ENCODE measurements at regions of chr4 and their contacts with region 1.

Region 1: DNA sequence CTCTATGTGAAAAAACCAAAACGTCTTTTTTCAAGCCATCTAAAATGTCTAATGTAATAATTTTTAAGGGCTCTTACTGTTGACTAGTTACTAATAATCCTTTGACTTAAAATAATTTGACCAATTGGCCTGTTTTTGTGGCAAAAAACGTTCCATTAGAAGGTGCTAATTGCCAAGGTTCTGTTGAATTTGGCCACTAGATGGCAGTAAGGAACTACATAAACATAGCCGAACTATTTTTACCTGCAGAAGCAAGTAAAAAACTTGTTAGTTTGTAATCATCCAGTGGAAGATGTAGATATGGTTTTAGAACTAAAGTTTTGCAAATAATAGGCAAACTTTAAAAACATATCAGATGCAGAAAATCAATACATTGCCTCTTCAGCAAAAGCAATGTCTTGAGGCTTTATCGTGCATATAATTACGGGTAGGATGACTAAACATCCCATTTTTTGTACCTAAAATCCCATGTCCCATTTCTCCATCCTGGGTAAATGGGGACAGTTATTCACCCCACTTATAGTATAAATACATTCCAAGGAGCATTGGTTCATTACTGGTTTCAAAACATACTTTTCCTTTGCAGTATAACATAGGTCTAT is 57.6 kb downstream of the PROM1 start:
- DNase-seq: no peak
- ATAC-seq: peak; percentile 35 to 49

Region 2: GRCh38 chr4:15809058-15809457 is 217.2 kb before region 1 on chr4:
- intact Hi-C with region 1: no loop called
- DNase-seq: no peak
- ATAC-seq: peak in 1 of 2 donors; percentile 53

Region 3: DNA sequence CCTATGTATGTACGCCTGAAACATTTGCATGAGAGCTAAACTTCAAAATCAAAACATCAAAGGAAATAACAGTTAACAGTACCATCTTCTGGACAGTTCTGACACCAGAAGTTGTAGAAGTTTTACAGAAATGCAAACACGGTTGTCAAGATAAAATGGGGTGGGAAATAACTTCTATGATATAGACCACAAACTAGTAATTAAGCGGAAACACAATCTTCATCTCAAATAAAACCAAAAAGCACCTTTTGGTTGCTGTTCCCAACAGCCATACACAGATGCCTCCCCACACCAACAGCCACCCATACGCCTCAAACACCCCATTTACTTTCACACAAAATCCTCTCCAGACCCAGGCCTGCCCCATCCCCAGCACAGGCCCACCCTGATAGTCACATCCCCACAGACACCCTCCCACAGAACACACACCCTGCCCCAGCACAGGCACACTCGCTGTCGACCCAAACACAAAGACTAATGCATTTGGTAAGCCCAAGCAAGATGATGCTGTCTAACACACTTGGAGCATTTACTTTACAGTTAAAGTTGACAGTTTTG is 135.7 kb after region 1 on chr4:
- intact Hi-C with region 1: loop called in 1 of 2 experiments (anchors 10 kb)
- DNase-seq: no peak
- ATAC-seq: no peak

Region 4: GRCh38 chr4:16196478-16197393 is 170.5 kb after region 1 on chr4:
- intact Hi-C with region 1: loop called (anchors 2 to 10 kb)
- DNase-seq: no peak
- ATAC-seq: peak; percentile 88 to 90

Region 5: GRCh38 chr4:16264798-16265197 is 238.5 kb after region 1 on chr4:
- intact Hi-C with region 1: loop called (anchors 1 to 10 kb)
- DNase-seq: no peak
- ATAC-seq: peak; percentile 67 to 75